ENCODE measurements at regions of chr12 and their contacts with region 1.

Region 1: DNA sequence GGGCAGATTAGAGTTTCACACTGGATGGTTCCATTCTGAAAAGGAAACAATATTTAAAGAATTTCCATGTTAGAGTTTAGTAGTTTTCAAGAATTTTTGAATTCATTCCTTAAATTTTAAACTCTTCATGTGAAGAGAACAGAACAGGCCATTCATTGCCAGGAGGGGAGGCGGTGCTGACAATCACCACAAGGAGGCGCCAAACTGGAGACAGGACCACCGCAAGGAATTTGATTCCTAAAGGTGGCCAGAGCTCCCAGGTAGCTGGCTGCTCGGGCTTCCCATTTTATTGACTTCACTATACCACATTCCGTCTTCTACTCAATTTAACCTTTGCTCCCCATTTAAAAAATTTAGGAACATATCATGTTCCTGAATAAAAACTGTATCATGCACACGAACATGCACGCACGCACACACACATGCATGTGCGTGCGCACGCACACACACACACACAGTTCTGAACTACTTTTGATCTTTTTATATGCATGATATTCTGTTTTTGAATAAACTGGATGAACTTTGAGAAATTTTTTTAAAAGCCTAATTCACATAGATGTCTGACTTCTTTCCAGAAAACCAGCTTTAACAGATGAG is 101.2 kb downstream of the NELL2 start:
- DNase-seq: peak; percentile 62

Region 2: DNA sequence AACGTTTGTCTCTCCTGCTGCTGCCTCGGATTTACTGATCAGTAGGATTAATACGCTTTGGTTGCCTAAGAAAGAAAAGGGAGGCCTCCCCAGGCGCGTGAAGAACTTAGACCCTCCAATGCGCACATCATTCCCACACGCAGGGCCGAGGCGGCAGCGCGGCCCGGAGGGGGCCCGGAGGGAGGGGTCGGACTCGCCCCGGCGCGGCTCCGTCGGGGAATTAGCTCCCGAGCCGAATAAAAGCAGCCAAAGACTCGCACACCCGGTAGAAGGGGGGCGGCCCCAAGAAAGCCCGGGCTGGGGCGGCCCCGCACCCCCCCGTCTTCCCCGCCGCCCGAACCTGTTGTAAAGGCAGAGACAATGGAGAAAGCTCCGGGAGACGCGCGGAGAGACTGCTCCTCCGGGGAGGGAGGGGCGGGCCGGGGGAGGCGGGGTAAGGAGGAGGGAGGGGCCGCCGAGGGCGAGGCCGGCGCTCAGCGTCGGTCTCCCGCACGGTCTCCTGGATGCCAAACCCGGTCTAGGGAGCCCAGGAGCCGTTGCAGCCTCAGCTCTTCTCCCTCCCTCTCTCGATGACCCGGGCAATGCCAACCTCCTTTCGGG is 101.1 kb after region 1 on chr12 and contains the start of gene NELL2:
- in situ Hi-C with region 1: loop called (anchors 10 kb)
- DNase-seq: peak; percentile 42
- total RNA-seq, gene NELL2: 0.21 and 0.45 TPM in 2 replicates